ENCODE measurements at regions of chr11 and their contacts with region 1.

Region 1: DNA sequence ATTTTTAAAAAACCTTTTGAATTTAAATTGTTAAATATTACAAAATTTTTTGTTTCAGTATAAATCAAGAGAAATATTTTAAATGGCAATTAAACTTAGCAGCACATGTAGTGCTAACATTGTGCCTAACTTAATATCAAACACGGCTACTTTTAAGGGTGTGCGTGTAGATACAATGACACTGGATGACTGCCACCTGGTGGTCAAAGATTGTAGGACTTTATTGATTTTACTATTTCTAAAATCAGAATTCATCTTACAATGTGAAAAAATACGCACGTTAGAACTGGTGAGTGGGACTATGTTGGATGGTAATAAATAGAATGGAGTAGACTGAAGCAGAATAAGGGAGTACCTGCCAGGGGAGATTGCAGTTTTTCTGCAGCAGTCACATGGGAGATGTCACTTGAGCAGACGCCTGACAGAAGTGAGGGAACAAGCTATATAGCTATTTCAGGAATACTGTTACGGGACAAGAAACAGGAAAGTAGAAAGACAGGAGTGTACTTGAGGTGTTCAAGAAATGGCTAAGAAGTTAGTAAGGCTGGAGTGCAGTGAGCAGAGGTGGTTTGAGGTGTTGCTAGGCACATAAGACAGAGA is 52.9 kb downstream of the UVRAG start:
- DNase-seq: peak; percentile 76
- H3K4me3 ChIP-seq: no peak overlapping the region
- H3K27ac ChIP-seq: no peak overlapping the region
- H3K4me1 ChIP-seq: peaks cover 21% of the 10 kb centered on the region
- CTCF ChIP-seq: peak; percentile 96

Region 2: GRCh38 chr11:75721855-75722668 is 145.8 kb before region 1 on chr11:
- CTCF ChIA-PET with region 1: no interaction called
- POLR2A ChIA-PET with region 1: no interaction called
- intact Hi-C with region 1: loop called (anchors 5 kb)
- DNase-seq: no peak
- H3K4me3 ChIP-seq: no peak overlapping the region
- H3K27ac ChIP-seq: no peak overlapping the region
- H3K4me1 ChIP-seq: no peaks in the 10 kb centered on the region
- CTCF ChIP-seq: no peak

Region 3: DNA sequence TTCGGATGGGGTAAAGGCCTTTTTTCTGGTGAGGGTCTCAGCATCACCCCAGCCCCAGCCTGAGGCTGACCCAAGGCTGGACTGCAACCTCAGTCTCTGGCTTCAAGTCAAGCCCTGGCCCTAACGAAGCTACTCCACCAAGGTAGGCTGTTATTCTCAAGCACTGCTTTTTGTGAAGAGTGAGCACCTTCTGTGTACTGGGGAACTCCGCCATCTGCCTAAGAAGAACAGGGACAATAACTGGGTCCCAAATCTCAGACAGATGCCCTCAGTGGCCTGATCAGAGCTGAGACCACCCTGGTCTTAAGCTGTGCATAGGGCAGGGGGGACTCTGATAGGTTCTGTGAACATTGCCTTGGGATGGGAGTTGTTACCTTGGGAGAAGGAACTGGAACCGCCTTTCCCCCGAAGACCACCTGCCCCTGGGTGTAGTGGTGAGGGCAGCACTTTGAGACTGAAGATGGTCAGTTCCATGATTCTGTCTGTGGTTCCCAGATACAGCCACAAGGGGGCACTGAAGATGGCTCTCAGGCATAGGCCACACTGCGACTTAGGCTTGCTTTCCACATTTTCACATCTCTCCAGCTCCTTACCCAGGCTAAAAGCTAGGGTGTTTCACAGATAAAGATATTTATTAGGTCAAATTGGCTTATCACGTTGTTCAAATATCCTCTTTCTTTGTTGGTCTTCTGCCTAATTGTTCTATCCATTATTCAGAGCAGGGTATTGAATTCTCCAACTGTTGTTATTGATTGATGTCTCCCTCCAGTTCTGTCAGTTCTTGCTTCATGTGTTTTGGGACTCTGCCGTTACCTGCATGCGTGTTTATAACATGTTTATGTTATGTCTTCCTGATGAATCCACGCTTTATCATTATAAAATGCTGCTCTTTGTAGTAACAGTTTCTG is 64.7 kb before region 1 on chr11:
- CTCF ChIA-PET with region 1: interaction called, 7 read pairs
- POLR2A ChIA-PET with region 1: interaction called, 8 read pairs
- intact Hi-C with region 1: loop called (anchors 1 kb)
- DNase-seq: peak; percentile 80
- H3K4me3 ChIP-seq: no peak overlapping the region
- H3K27ac ChIP-seq: no peak overlapping the region
- H3K4me1 ChIP-seq: peaks cover 14% of the 10 kb centered on the region
- CTCF ChIP-seq: peak; percentile 98

Measured in OCI-LY7 (cell line).